A673 (cell line): ENCODE measurements at regions of chr4 and their contacts with region 1.

Region 1: DNA sequence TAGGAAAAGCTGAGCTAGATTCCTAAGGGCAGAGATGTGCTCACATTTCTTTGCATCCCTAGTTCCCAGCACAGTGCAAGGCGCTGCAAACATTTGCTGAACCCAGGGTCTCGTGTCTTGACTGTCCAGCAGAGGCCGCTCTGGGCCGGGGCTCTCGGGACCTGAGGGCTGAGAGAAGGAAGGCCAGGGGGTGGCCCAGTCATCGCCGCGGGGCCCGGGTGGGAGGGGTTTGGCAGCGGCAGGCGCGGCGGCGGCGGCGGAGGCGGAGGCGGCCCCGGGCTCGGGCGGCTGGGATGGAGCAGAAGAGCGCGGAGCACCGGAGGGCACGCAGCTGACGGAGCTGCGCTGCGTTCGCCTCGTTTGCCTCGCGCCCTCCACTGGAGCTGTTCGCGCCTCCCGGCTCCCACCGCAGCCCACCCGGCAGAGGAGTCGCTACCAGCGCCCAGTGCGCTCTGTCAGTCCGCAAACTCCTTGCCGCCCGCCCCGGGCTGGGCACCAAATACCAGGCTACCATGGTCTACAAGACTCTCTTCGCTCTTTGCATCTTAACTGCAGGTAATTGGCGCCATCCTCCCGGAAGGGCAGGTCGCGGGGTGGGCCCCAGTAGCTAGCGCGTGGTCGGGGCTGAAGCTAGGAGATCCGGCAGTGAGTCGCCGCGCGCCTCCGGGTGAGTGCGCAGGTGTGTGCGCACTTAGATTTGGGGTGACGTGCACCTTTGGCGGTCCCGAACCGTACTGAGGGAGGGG is at the start of gene PARM1:
- DNase-seq: peak; percentile 79
- H3K4me3 ChIP-seq: peak within 1 kb of the TSS; percentile 52
- H3K27ac ChIP-seq: no peak within 1 kb of the TSS
- H3K4me1 ChIP-seq: no peaks in the 10 kb centered on the region
- H3K27me3 ChIP-seq: no peaks in the 10 kb centered on the region
- CTCF ChIP-seq: peak; percentile 51
- total RNA-seq, gene PARM1: 12.3 and 12.9 TPM in 2 replicates

Region 2: GRCh38 chr4:75289914-75290582 is 357.1 kb after region 1 on chr4:
- CTCF ChIA-PET with region 1: no interaction called
- POLR2A ChIA-PET with region 1: no interaction called
- intact Hi-C with region 1: loop called (anchors 2 kb)
- DNase-seq: peak; percentile 41
- H3K4me3 ChIP-seq: no peak overlapping the region
- H3K27ac ChIP-seq: no peak overlapping the region
- H3K4me1 ChIP-seq: no peaks in the 10 kb centered on the region
- H3K27me3 ChIP-seq: no peaks in the 10 kb centered on the region
- CTCF ChIP-seq: peak; percentile 50